GM12878 (cell line): ENCODE measurements at regions of chr9 and their contacts with region 1.

Region 1: GRCh38 chr9:134778841-134779411 is 101.7 kb upstream of the FCN2 start:
- DNase-seq: no peak
- ATAC-seq: peak; percentile 77
- H3K4me3 ChIP-seq: no peak overlapping the region
- H3K27ac ChIP-seq: no peak overlapping the region
- H3K4me1 ChIP-seq: peaks cover 6% of the 10 kb centered on the region; the same call in 1 of the 2 replicates
- H3K27me3 ChIP-seq: no peaks in the 10 kb centered on the region; a peak in 1 of 4 replicates
- CTCF ChIP-seq: peak; percentile 45 to 64 (median 53)
- EP300 ChIP-seq: no peak
- POLR2A ChIP-seq: no peak
- RAD21 ChIP-seq: no peak

Region 2: GRCh38 chr9:134983074-134983473 is 204.1 kb after region 1 on chr9:
- CTCF ChIA-PET with region 1: interaction called, 17 read pairs
- POLR2A ChIA-PET with region 1: no interaction called
- RAD21 ChIA-PET with region 1: no interaction called
- SMC1A ChIA-PET with region 1: interaction called, 9 read pairs
- in situ Hi-C with region 1: no loop called
- intact Hi-C with region 1: loop called (anchors 5 kb)
- DNase-seq: peak; percentile 2
- ATAC-seq: peak; percentile 54
- H3K4me3 ChIP-seq: no peak overlapping the region
- H3K27ac ChIP-seq: no peak overlapping the region
- H3K4me1 ChIP-seq: no peaks in the 10 kb centered on the region
- H3K27me3 ChIP-seq: no peaks in the 10 kb centered on the region
- CTCF ChIP-seq: peak; percentile 55 to 73 (median 65); a peak in 5 of 6 replicates
- EP300 ChIP-seq: no peak
- POLR2A ChIP-seq: no peak
- RAD21 ChIP-seq: peak; percentile 71